ENCODE measurements at regions of chr2 and their contacts with region 1.

Region 1: GRCh38 chr2:164910101-164910899 is 45.0 kb downstream of the SLC38A11 start:
- DNase-seq: peak; percentile 39 to 60
- H3K4me3 ChIP-seq: no peak overlapping the region
- H3K4me3 Mint-ChIP-seq: peak overlapping the region; percentile 4
- H3K27ac Mint-ChIP-seq: peak overlapping the region; percentile 60
- H3K4me1 ChIP-seq: peaks cover 67% of the 10 kb centered on the region
- H3K4me1 Mint-ChIP-seq: peaks cover 29% of the 10 kb centered on the region
- H3K27me3 ChIP-seq: no peaks in the 10 kb centered on the region
- H3K27me3 Mint-ChIP-seq: no peaks in the 10 kb centered on the region
- CTCF ChIP-seq: no peak

Region 2: DNA sequence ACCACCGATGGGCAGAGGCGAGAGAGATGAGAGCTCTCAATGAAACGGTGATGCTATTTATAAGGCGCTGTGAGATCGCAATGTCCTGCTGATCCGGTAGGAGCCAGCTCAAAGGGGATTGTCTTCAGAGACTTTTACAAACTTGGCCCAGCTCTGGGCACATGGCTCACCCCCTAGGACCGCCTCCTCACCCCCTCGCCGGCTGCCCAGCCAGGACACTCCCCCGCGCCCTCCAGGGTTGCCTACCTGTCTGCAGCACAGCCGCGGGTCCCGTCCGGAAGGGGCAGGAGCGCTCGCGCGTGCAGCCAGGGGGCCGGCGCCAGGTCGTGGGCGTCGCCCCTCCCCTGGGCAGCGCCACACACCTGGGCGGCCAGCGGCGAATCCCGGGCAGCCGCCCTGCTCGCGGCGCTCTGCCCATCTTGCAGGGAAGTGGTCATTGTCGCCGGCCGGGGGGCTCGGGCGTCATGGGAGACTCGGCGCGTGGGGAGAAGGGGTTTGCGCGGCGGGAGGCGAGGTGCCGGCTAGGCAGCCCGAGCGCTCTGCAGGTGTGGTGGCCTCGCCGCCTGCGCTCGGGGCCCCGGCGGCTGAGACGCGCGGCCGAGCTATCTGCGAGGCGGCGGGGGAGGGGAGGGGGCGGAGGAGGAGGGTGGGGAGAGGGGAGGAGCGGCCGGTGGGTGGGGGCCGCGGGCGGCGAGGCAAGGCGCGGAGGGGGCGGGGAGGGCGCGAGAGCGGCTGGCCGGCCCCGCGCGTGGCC is 289.2 kb before region 1 on chr2 and contains the start of gene GRB14:
- CTCF ChIA-PET with region 1: no interaction called
- POLR2A ChIA-PET with region 1: no interaction called
- intact Hi-C with region 1: loop called (anchors 2 kb)
- DNase-seq: peak; percentile 85 to 86
- H3K4me3 ChIP-seq: peak within 1 kb of the TSS; percentile 94
- H3K4me3 Mint-ChIP-seq: peak within 1 kb of the TSS; percentile 85
- H3K27ac Mint-ChIP-seq: peak within 1 kb of the TSS; percentile 63
- H3K4me1 ChIP-seq: peaks cover 18% of the 10 kb centered on the region
- H3K4me1 Mint-ChIP-seq: peaks cover 13% of the 10 kb centered on the region
- H3K27me3 ChIP-seq: no peaks in the 10 kb centered on the region
- H3K27me3 Mint-ChIP-seq: no peaks in the 10 kb centered on the region
- CTCF ChIP-seq: peak; percentile 10 to 18
- total RNA-seq, gene GRB14: 10.1 and 12.7 TPM in 2 replicates

Region 3: DNA sequence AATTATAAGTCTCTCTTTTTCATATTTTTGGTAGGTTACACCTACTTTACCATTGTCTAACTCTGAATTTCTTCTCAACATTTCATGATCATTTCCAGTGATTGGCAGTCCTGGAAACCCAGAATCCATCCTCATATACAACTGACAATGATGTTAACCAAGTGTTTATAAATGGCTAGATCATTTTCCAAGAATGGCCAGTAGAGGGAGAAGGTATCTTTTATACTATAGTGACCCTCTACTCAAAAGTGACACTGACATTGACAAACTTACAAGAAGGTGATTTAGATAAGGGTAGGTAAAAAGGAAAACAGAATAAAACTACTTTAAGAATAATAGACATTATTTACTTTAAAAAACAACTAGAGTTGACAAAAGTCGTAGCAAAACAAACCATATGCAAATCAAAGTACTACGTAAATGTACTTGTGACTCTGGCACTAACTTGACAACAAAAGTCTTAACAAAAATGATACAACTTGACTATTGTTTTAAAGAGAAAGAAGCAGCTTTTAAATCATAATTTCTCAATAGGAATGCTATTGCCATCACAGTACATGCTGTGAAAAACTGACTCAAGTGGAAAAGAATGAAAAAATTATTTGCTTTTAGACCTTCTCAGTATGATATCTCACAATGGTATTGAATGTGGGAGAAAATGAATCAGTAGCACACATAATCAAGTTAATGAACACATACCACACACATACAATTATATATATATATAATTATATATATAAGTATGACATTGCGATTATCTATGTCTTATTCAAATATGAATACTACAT is 212.4 kb before region 1 on chr2:
- CTCF ChIA-PET with region 1: no interaction called
- POLR2A ChIA-PET with region 1: no interaction called
- intact Hi-C with region 1: loop called (anchors 1 kb)
- DNase-seq: peak in 1 of 2 experiments; percentile 36
- H3K4me3 ChIP-seq: no peak overlapping the region
- H3K4me3 Mint-ChIP-seq: peak overlapping the region; percentile 45
- H3K27ac Mint-ChIP-seq: no peak overlapping the region
- H3K4me1 ChIP-seq: peaks cover 18% of the 10 kb centered on the region
- H3K4me1 Mint-ChIP-seq: peaks cover 14% of the 10 kb centered on the region
- H3K27me3 ChIP-seq: no peaks in the 10 kb centered on the region
- H3K27me3 Mint-ChIP-seq: no peaks in the 10 kb centered on the region
- CTCF ChIP-seq: peak; percentile 65 to 66

Region 4: DNA sequence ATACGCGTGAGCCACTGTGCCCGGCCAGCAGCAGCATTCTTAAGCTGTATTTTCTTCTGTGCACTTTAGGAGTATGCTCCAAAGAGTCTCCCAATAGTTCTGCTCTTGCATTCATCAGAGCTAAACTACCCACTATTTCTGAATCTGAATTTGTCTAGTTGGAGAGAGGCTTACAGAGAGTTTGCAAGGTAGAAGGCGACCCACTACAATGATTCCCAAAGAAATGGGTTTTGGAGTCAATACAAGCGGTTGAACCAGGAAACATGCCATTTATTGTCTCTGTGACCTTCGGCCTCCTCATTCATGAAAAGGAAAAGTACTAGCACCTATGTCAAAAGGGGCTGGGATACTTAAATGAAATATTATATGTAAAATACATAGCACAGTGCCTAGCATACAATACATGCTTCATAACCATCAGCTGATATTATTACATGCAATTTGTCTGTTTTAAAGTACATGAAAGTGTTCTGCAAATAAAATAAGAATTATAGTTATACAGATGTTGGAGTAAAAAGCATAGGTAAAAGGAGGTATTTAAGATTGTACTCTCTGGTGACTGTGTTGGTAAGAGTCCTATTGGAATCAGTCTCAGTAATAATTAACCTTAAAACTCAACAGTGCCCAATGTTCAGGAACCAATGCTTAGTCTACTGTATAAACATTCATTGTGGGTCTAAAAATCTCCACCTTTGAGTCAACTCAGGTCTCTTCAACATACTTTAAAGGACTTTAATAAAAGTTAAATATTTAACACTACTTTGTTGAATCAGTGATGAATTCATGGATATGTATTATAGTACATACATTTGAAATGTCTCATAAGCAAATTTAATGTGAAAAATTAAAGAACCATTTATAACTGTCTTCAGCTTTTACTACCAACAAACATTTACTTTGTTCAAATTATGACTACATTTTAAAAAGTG is 199.2 kb before region 1 on chr2:
- CTCF ChIA-PET with region 1: no interaction called
- POLR2A ChIA-PET with region 1: no interaction called
- intact Hi-C with region 1: loop called (anchors 1 kb)
- DNase-seq: peak; percentile 46 to 56
- H3K4me3 ChIP-seq: 0 out of 2 replicates have a peak overlapping the region, but pooled peaks have one; percentile 3
- H3K4me3 Mint-ChIP-seq: peak overlapping the region; percentile 59
- H3K27ac Mint-ChIP-seq: peak overlapping the region; percentile 40
- H3K4me1 ChIP-seq: peaks cover 66% of the 10 kb centered on the region
- H3K4me1 Mint-ChIP-seq: peaks cover 41% of the 10 kb centered on the region
- H3K27me3 ChIP-seq: no peaks in the 10 kb centered on the region
- H3K27me3 Mint-ChIP-seq: no peaks in the 10 kb centered on the region
- CTCF ChIP-seq: no peak

Region 5: DNA sequence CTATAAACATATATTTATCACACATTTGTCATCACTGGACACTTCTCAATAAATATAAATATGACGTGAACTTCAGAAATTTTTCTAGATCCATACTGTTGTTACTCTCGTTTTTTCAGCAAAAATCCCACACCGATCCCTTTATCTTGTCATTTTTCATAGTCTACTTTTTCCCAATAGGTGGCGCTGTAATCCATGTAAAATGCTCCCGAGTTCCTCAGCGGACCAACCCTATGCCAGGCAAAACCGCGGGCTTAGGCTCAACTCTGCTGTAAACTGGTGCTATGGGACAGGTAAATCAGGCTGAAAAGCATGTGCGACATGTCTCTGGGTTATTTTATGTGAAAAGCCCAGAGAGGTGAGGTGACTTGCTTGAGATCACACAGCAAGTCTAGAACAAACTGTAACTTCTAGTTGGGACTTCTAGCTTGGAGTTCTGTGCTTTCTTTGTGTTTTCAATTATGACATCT is 172.7 kb before region 1 on chr2:
- CTCF ChIA-PET with region 1: interaction called, 3 read pairs
- POLR2A ChIA-PET with region 1: no interaction called
- intact Hi-C with region 1: loop called (anchors 1 kb)
- DNase-seq: peak; percentile 75 to 80
- H3K4me3 ChIP-seq: no peak overlapping the region
- H3K4me3 Mint-ChIP-seq: no peak overlapping the region
- H3K27ac Mint-ChIP-seq: no peak overlapping the region
- H3K4me1 ChIP-seq: peaks cover 25% of the 10 kb centered on the region
- H3K4me1 Mint-ChIP-seq: peaks cover 19% of the 10 kb centered on the region
- H3K27me3 ChIP-seq: no peaks in the 10 kb centered on the region
- H3K27me3 Mint-ChIP-seq: no peaks in the 10 kb centered on the region
- CTCF ChIP-seq: peak; percentile 65 to 67

Region 6: DNA sequence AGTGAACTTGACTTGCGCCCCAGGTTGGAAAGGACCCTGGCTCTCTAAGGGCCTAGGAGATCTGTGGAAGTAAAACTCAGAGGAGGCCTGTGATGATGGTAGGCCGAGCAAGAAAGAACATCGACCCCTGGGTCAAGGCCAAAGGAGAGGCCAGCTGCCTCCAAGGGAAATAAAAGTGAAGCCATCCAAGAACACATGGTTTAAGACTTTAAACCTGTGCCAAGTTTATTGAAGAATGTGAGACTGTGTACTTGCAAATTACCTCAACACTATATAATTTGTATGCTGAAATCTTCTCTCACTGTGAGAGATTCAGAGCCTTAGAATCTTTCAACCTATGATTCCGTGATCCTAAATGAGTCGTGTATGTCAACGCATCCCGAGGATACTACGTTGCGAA is 28.0 kb before region 1 on chr2:
- CTCF ChIA-PET with region 1: no interaction called
- POLR2A ChIA-PET with region 1: no interaction called
- intact Hi-C with region 1: loop called (anchors 2 kb)
- DNase-seq: no peak
- H3K4me3 ChIP-seq: no peak overlapping the region
- H3K4me3 Mint-ChIP-seq: no peak overlapping the region
- H3K27ac Mint-ChIP-seq: peak overlapping the region; percentile 7
- H3K4me1 ChIP-seq: peaks cover 2% of the 10 kb centered on the region
- H3K4me1 Mint-ChIP-seq: no peaks in the 10 kb centered on the region
- H3K27me3 ChIP-seq: no peaks in the 10 kb centered on the region
- H3K27me3 Mint-ChIP-seq: no peaks in the 10 kb centered on the region
- CTCF ChIP-seq: no peak

Region 7: DNA sequence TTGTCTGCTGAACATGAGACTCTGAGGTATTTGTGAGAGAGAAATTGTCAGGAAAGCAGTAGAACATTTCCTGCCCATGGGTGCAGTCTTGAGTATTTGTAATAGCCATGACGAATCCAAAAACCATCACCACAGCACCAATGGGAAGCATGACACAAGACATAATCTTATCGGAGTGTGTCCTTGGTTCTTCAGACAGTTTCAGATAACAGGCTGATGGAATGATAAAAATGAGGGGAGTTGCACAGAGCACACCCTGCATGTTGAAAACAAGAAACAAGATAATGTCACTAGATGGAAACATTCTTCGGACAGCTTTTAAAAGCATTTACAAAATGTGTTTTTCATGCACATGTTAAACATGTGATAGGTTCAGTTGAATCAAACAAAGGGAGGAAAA is 11.8 kb before region 1 on chr2:
- CTCF ChIA-PET with region 1: no interaction called
- POLR2A ChIA-PET with region 1: no interaction called
- intact Hi-C with region 1: loop called (anchors 1 kb)
- DNase-seq: peak; percentile 80 to 83
- H3K4me3 ChIP-seq: no peak overlapping the region
- H3K4me3 Mint-ChIP-seq: peak overlapping the region; percentile 65
- H3K27ac Mint-ChIP-seq: peak overlapping the region; percentile 72
- H3K4me1 ChIP-seq: peaks cover 34% of the 10 kb centered on the region
- H3K4me1 Mint-ChIP-seq: peaks cover 26% of the 10 kb centered on the region
- H3K27me3 ChIP-seq: no peaks in the 10 kb centered on the region
- H3K27me3 Mint-ChIP-seq: no peaks in the 10 kb centered on the region
- CTCF ChIP-seq: no peak

Region 8: GRCh38 chr2:164922134-164922533 is 11.8 kb after region 1 on chr2:
- CTCF ChIA-PET with region 1: no interaction called
- POLR2A ChIA-PET with region 1: no interaction called
- intact Hi-C with region 1: no loop called
- DNase-seq: no peak
- H3K4me3 ChIP-seq: no peak overlapping the region
- H3K4me3 Mint-ChIP-seq: no peak overlapping the region
- H3K27ac Mint-ChIP-seq: no peak overlapping the region
- H3K4me1 ChIP-seq: peaks cover 5% of the 10 kb centered on the region; the same call in 1 of the 2 replicates
- H3K4me1 Mint-ChIP-seq: peaks cover 13% of the 10 kb centered on the region
- H3K27me3 ChIP-seq: no peaks in the 10 kb centered on the region
- H3K27me3 Mint-ChIP-seq: no peaks in the 10 kb centered on the region
- CTCF ChIP-seq: no peak

Region 9: DNA sequence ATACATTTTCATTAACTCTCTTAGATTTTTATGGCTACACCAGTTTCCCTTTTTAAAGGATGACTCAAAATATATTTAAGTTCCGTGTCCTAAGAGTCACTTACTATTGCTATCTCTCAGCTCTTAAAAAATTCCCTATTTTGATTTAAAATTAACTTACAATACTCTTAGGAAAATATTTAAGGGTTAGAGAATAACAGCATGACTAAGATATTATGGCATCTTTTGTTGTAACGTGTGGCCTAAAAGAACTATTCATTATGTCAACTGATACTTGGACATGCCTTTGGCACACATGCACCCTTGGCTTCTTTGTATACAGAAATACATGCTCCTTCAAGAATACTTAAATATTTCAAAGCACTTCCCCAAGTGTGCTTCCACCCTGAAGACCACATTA is 251.2 kb after region 1 on chr2:
- CTCF ChIA-PET with region 1: no interaction called
- POLR2A ChIA-PET with region 1: no interaction called
- intact Hi-C with region 1: no loop called
- DNase-seq: no peak
- H3K4me3 ChIP-seq: no peak overlapping the region
- H3K4me3 Mint-ChIP-seq: no peak overlapping the region
- H3K27ac Mint-ChIP-seq: no peak overlapping the region
- H3K4me1 ChIP-seq: no peaks in the 10 kb centered on the region
- H3K4me1 Mint-ChIP-seq: no peaks in the 10 kb centered on the region
- H3K27me3 ChIP-seq: no peaks in the 10 kb centered on the region
- H3K27me3 Mint-ChIP-seq: peaks cover 2% of the 10 kb centered on the region
- CTCF ChIP-seq: no peak

Measured in Caco-2 (cell line).